H1 (cell line): ENCODE measurements at regions of chr11 and their contacts with region 1.

Region 1: DNA sequence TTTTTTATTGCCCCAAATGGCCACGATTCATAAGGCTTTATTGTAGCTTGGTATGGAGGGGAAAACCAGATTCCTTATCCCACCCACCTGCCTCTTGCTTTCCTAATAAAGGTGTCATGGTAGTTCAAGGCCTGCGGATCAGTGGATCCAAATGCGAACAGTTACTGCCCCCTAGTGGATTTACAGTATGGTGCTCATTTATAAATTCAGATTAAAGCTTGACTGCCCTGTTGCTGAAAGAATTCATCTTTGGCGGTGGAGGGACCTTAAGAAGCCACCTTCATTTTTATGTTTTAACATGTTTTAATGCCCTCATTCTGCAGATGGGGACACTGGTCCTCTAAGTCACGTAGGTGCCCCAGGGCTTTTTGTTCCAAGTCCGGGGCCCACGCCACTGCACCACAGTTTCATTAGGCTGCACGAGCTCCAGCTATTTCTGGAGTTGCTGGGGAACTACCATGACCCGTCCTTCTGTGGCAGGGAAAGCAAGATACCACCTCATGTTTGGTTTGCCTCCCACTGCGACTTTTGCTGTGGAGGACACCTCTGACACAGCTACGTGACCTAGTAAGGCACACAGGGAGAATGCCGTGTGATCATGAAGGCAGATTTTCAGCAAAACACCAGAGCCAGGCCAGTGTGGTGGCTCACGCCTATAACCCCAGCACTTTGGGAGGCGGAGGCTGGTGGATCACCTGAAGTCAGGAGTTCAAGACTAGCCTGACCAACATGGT is 15.6 kb upstream of the INCENP start:
- DNase-seq: peak in 1 of 2 experiments; percentile 19
- H3K4me3 ChIP-seq: no peak overlapping the region
- H3K27ac ChIP-seq: no peak overlapping the region
- H3K4me1 ChIP-seq: no peaks in the 10 kb centered on the region; a peak in 1 of 7 replicates
- H3K27me3 ChIP-seq: no peaks in the 10 kb centered on the region
- CTCF ChIP-seq: peak in 2 of 3 experiments; percentile 77 to 83; a peak in 3 of 4 replicates
- EP300 ChIP-seq: no peak
- POLR2A ChIP-seq: no peak
- RAD21 ChIP-seq: peak; percentile 93 to 94

Region 2: DNA sequence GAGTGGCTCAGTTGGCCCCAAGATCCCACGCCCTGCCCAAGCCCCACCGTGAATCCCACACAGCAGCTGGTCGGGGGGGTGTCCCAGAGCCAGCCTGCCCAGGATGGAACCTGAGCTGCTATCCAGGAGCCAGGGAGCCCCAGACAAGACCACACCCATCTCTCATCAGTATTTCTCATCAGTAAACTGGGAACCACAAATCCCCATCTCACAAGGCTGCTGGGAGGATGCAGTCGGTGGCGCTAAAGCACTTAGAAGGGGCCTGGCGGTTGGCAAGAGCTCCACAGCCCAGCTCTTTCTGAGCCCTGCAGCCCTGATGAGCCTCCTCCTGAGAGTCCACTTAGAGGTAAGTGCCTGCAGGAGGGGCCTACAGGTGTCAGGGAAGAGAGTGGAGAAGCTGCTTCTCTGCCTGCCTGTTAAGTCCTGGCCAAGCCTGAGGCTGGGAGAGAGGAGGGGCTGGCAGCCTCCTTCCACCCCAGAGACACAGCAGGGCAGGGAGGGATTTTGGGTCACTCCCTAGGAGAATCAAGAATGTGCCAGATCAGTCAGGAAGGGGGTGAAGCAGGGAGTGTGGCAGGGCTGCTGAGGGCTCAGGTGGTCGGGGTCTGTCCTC is 222.9 kb before region 1 on chr11:
- CTCF ChIA-PET with region 1: interaction called, 11 read pairs
- POLR2A ChIA-PET with region 1: no interaction called
- DNase-seq: peak in 1 of 2 experiments; percentile 45
- H3K4me3 ChIP-seq: no peak overlapping the region
- H3K27ac ChIP-seq: no peak overlapping the region
- H3K4me1 ChIP-seq: peaks cover 0 to 15% (median 6%) of the 10 kb centered on the region in 4 experiments; a peak in 5 of 7 replicates
- H3K27me3 ChIP-seq: no peaks in the 10 kb centered on the region
- CTCF ChIP-seq: no peak
- EP300 ChIP-seq: no peak
- POLR2A ChIP-seq: no peak
- RAD21 ChIP-seq: 0 out of 4 replicates have a peak, but pooled peaks of 1 of the 2 experiments have one; percentile 2

Region 3: GRCh38 chr11:61961570-61962212 is 146.5 kb before region 1 on chr11:
- CTCF ChIA-PET with region 1: interaction called, 15 read pairs
- POLR2A ChIA-PET with region 1: interaction called, 10 read pairs
- DNase-seq: no peak
- H3K4me3 ChIP-seq: no peak overlapping the region
- H3K27ac ChIP-seq: no peak overlapping the region
- H3K4me1 ChIP-seq: no peaks in the 10 kb centered on the region
- H3K27me3 ChIP-seq: peaks cover 0 to 1% (median 0%) of the 10 kb centered on the region in 4 experiments; a peak in 2 of 7 replicates
- CTCF ChIP-seq: no peak
- EP300 ChIP-seq: no peak
- POLR2A ChIP-seq: no peak
- RAD21 ChIP-seq: no peak

Region 4: DNA sequence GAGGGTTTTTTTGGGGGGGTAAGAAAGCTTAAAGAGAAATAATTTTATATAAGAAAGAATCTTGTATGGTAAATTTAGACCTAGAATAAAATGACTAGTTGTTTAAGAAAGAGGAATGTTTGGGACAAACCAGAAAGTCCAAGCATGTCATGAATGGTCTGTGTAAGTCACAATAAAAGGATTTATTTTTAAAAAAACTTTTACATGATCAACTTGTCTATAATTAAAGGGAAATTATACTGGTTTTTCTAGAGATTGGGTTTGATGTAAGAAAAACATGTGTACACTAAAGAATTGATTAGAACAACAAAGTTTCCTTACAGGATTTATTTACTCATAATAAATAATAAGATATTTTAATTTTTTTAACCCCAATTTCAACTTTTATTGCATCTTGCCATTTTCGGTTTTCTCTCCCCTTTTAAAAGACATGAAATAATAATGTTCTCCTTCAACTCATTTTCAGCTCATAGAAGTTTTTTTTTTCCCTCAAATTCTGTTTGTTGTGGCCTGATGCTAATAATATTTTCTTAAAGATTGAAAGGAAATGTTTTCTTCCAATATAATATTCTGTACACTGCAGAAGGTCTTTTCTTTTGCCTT is 19.8 kb before region 1 on chr11:
- CTCF ChIA-PET with region 1: interaction called, 14 read pairs
- POLR2A ChIA-PET with region 1: no interaction called
- DNase-seq: no peak
- H3K4me3 ChIP-seq: no peak overlapping the region
- H3K27ac ChIP-seq: no peak overlapping the region
- H3K4me1 ChIP-seq: no peaks in the 10 kb centered on the region
- H3K27me3 ChIP-seq: no peaks in the 10 kb centered on the region
- CTCF ChIP-seq: no peak
- EP300 ChIP-seq: no peak
- POLR2A ChIP-seq: no peak
- RAD21 ChIP-seq: no peak

Region 5: GRCh38 chr11:62223095-62223494 is 114.9 kb after region 1 on chr11:
- CTCF ChIA-PET with region 1: no interaction called
- POLR2A ChIA-PET with region 1: no interaction called
- DNase-seq: no peak
- H3K4me3 ChIP-seq: no peak overlapping the region
- H3K27ac ChIP-seq: no peak overlapping the region
- H3K4me1 ChIP-seq: peaks cover 0 to 3% (median 0%) of the 10 kb centered on the region in 4 experiments; a peak in 1 of 7 replicates
- H3K27me3 ChIP-seq: no peaks in the 10 kb centered on the region
- CTCF ChIP-seq: no peak
- EP300 ChIP-seq: no peak
- POLR2A ChIP-seq: no peak
- RAD21 ChIP-seq: no peak